Activated CD4-positive, alpha-beta memory T cell treated with anti-CD3 and anti-CD28 coated beads for 36 hours (primary cell): ENCODE measurements at regions of chr6 and their contacts with region 1.

Region 1: GRCh38 chr6:138007014-138007472 is 100.2 kb downstream of the PERP start:
- DNase-seq: peak; percentile 46
- H3K4me3 Mint-ChIP-seq: no peak overlapping the region
- H3K27ac Mint-ChIP-seq: no peak overlapping the region
- H3K4me1 Mint-ChIP-seq: peaks cover 11% of the 10 kb centered on the region
- H3K27me3 Mint-ChIP-seq: peaks cover 3% of the 10 kb centered on the region

Region 2: GRCh38 chr6:137351890-137352289 is 655.2 kb before region 1 on chr6:
- CTCF ChIA-PET with region 1: no interaction called
- POLR2A ChIA-PET with region 1: no interaction called
- intact Hi-C with region 1: no loop called
- DNase-seq: no peak
- H3K4me3 Mint-ChIP-seq: no peak overlapping the region
- H3K27ac Mint-ChIP-seq: no peak overlapping the region
- H3K4me1 Mint-ChIP-seq: peaks cover 16% of the 10 kb centered on the region
- H3K27me3 Mint-ChIP-seq: no peaks in the 10 kb centered on the region

Region 3: DNA sequence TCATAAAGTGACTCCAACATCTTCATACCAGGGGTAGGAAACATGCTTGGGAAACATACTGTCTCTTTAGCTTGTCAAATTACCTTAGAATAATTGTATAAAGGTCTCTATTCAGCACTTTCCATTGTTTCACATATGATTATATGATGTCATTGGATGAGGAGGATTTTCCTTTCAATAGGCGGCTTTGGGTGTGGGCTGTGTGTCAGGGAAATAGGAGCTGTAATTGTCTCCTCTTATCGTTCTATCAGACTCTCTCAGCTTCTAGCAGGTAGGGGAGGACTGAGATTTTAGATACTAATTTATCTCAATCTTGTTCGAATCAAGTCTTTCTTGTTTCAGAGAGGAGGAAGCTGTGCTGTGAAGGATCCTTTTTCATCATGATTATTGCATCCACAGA is 333.4 kb before region 1 on chr6:
- CTCF ChIA-PET with region 1: no interaction called
- POLR2A ChIA-PET with region 1: no interaction called
- intact Hi-C with region 1: no loop called
- DNase-seq: no peak
- H3K4me3 Mint-ChIP-seq: no peak overlapping the region
- H3K27ac Mint-ChIP-seq: no peak overlapping the region
- H3K4me1 Mint-ChIP-seq: peaks cover 26% of the 10 kb centered on the region
- H3K27me3 Mint-ChIP-seq: peaks cover 18% of the 10 kb centered on the region

Region 4: GRCh38 chr6:138017166-138017757 is 10.2 kb after region 1 on chr6:
- CTCF ChIA-PET with region 1: interaction called, 14 read pairs
- POLR2A ChIA-PET with region 1: no interaction called
- intact Hi-C with region 1: no loop called
- DNase-seq: no peak
- H3K4me3 Mint-ChIP-seq: no peak overlapping the region
- H3K27ac Mint-ChIP-seq: no peak overlapping the region
- H3K4me1 Mint-ChIP-seq: no peaks in the 10 kb centered on the region
- H3K27me3 Mint-ChIP-seq: no peaks in the 10 kb centered on the region

Region 5: GRCh38 chr6:138109042-138109997 is 102.3 kb after region 1 on chr6:
- CTCF ChIA-PET with region 1: interaction called, 89 read pairs
- POLR2A ChIA-PET with region 1: interaction called, 4 read pairs
- intact Hi-C with region 1: no loop called
- DNase-seq: peak; percentile 89
- H3K4me3 Mint-ChIP-seq: no peak overlapping the region
- H3K27ac Mint-ChIP-seq: no peak overlapping the region
- H3K4me1 Mint-ChIP-seq: peaks cover 21% of the 10 kb centered on the region
- H3K27me3 Mint-ChIP-seq: peaks cover 12% of the 10 kb centered on the region

Region 6: DNA sequence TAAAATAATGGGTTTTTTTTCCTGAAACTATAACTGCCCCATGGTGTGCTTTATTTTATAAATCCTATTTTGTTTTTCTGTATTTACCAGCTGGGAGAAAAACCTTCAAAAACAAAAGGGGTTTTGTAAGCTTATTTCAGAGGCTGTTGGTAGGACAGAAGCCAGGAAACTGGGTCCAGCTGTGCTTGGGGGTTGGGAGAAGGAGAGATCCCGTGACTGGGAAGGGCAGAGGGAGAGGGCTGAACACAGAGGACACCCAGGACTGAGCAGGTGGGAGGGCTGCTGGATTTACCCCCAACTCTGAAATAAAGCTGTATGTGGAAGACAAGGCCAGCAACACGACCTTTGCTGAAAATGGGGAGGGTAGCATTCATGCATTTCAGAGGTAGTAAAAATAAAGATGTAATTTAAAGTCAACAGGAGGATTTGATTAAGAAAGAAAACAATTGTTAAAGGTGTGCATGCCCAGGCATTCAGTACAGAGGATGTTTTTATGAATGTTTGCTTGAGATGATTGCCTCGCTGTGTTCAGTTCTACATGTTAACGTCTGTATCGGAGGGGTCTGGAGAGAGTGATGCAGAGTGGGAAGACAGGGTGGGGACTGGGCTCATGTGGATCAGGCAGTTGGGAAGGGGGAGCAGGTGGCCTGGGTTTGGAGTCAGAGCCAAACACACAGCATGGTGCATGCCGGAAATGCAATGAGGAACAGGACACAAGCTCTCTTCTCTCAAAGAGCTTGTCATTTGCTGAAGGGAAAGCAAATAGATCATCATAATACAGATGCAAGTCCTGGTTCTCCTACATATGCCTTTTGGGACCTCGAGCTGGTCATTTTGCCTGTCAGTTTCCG is 176.1 kb after region 1 on chr6:
- CTCF ChIA-PET with region 1: no interaction called
- POLR2A ChIA-PET with region 1: no interaction called
- intact Hi-C with region 1: no loop called
- DNase-seq: no peak
- H3K4me3 Mint-ChIP-seq: no peak overlapping the region
- H3K27ac Mint-ChIP-seq: no peak overlapping the region
- H3K4me1 Mint-ChIP-seq: no peaks in the 10 kb centered on the region
- H3K27me3 Mint-ChIP-seq: peaks cover 23% of the 10 kb centered on the region